Motor neuron (in vitro differentiated cells): ENCODE measurements at regions of chr10 and their contacts with region 1.

Region 1: GRCh38 chr10:18689498-18689897 is 30.3 kb downstream of the ARL5B start:
- ATAC-seq: peak in 4 of 8 experiments; percentile 50 to 68 (median 59)
- H3K4me3 ChIP-seq: no peak overlapping the region
- H3K27ac ChIP-seq: no peak overlapping the region
- H3K4me1 ChIP-seq: no peaks in the 10 kb centered on the region

Region 2: DNA sequence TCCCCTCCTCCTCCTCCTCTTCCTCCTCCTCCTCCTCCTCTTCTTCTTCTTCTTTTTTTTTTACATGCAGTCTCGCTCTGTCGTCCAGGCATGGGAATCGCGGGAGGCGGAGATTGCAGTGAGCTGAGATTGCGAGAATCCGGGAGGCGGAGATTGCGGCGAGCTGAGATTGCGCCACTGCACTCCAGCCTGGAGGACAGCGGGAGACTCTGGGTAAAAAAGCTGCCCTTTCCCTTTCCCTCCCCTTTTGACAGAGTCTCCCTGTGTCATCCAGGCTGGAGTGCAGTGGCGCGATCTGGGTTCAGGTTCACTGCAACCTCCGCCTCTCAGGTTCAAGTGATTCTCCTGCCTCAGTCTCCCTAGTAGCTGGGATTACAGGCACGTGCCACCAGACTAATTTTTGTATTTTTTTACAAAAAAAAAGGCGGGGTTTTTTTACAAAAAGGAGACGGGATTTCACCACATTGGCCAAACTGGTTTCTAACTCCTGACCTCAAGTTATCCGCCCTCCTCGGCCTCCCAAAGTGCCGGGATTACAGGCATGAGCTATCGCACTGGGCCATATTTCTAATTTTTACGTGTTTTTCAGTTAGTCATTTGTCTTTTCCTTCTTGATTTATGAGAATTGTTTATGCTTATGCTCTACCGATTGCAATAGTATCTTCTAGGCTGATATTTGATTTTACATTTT is 191.2 kb after region 1 on chr10:
- in situ Hi-C with region 1: no loop called
- ATAC-seq: no peak
- H3K4me3 ChIP-seq: no peak overlapping the region
- H3K27ac ChIP-seq: no peak overlapping the region
- H3K4me1 ChIP-seq: no peaks in the 10 kb centered on the region

Region 3: GRCh38 chr10:19347621-19348020 is 658.1 kb after region 1 on chr10:
- in situ Hi-C with region 1: loop called in 1 of 9 experiments (anchors 25 kb)
- ATAC-seq: no peak
- H3K4me3 ChIP-seq: no peak overlapping the region
- H3K27ac ChIP-seq: no peak overlapping the region
- H3K4me1 ChIP-seq: no peaks in the 10 kb centered on the region